ENCODE measurements at regions of chr9 and their contacts with region 1.

Region 1: GRCh38 chr9:106859957-106860720 is 2.8 kb upstream of the ZNF462 start:
- DNase-seq: peak; percentile 45 to 52
- H3K4me3 ChIP-seq: peak overlapping the region; percentile 64 to 92 (median 71)
- H3K27ac ChIP-seq: peak overlapping the region; percentile 30 to 92 (median 92)
- H3K4me1 ChIP-seq: peaks cover 0 to 3% of the 10 kb centered on the region in 2 donors
- H3K27me3 ChIP-seq: no peaks in the 10 kb centered on the region
- CTCF ChIP-seq: no peak
- POLR2A ChIP-seq: no peak

Region 2: DNA sequence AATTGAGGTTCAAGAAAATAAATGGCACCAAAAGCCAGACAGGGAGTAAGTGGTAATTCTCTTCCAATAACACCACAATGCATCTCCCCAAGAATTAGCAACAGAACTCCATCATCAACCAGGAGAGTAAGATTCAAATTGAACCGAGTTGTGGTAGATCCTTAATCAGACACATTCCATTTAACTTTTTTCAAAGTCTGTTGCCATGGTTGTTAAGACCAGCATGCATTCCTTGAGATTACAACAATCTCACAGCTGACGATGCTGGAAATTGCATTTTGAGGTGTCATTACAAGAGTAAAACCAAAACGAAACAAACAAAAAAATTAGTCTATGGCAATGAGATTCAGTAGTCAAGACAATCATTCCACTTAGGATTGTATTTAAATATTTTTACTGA is 76.1 kb before region 1 on chr9:
- intact Hi-C with region 1: no loop called
- DNase-seq: no peak
- H3K4me3 ChIP-seq: no peak overlapping the region
- H3K27ac ChIP-seq: no peak overlapping the region
- H3K4me1 ChIP-seq: no peaks in the 10 kb centered on the region
- H3K27me3 ChIP-seq: no peaks in the 10 kb centered on the region
- CTCF ChIP-seq: no peak
- POLR2A ChIP-seq: no peak

Region 3: DNA sequence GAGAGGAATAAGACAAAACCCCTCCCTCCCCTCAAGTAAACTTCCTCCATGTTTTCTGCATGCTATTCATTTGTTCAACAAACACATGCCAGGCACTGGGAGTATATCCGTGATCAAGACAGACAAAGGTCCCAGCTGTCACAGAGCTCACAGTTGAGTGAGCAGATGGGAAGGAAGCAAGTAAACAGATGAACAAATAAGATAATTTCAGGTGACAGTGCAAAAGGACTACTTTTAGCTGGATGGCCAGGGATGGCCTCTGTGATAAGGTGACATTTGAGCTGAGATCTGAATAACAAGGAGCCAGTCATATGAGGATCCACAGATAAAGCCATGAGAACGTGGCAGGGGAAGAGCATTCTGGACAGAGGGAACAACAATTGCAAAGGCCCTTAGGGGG is 301.2 kb after region 1 on chr9:
- intact Hi-C with region 1: loop called (anchors 10 kb)
- DNase-seq: no peak
- H3K4me3 ChIP-seq: no peak overlapping the region
- H3K27ac ChIP-seq: no peak overlapping the region
- H3K4me1 ChIP-seq: no peaks in the 10 kb centered on the region
- H3K27me3 ChIP-seq: no peaks in the 10 kb centered on the region
- CTCF ChIP-seq: no peak
- POLR2A ChIP-seq: no peak